ENCODE measurements at regions of chr12 and their contacts with region 1.

Region 1: DNA sequence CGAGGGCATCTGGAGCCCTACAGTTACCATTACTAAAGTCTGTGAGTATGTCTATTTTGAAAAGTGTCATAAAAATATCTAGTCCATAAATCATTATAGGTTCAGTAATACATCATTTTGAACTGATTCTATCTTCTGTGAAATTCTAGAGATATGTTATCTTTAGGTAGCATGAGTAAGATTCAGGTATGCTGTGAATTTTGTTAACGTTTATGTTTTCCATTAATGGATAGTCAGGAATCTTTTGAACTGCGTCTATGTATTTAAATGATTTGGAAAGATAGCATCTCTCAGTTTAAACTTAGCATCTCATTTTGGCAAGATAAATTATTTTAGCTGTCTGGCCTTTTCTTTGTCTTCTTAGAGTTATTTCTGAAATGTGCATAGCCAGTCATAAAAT is 8.3 kb downstream of the ALG10B start:
- DNase-seq: no peak

Region 2: DNA sequence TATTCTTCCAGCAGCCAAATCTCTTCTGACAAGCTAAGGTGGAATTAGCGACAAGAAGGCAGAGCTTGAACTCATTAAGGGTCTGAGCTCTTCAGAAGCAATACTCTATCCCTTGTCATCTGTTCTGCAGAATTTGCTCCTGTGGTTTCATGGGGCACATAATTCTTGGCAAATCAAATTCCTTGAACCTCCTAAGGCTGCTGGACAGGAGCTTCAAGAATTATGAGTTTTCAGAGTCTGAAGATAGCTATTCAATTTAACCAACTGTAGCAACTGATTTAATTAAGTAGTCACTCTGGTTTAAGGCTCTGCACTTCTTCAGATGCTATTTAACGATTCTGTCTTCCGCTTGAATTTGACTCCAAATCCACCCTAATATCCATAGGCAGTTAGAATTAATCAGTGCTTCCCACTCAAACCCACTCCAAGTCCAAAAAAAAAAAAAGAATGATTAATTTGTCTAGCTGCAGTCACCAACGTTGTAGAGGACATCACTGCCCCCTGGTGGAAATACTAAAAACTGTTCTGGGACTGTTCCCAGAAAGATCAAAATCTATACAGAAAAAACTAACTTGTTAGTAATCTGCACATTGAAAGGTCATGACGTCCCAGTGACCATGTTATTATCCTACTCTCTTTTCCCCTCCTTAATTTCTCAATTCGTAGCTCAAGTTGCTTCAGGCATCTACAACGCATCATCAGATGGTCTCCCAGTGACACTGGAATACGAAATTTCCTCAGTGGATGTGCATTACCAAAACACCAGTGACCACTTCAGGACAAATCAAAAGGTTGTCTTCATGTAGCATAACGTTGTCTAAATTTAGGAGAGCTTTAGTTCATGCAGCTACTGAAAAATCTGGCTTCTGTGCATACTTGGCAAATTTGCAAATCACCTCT is 948.2 kb after region 1 on chr12:
- intact Hi-C with region 1: loop called (anchors 10 kb)
- DNase-seq: peak in 29 of 42 donors; percentile 6 to 80 (median 49)